Heart right ventricle (tissue), 16 donors: ENCODE measurements at regions of chr7 and their contacts with region 1.

Region 1: DNA sequence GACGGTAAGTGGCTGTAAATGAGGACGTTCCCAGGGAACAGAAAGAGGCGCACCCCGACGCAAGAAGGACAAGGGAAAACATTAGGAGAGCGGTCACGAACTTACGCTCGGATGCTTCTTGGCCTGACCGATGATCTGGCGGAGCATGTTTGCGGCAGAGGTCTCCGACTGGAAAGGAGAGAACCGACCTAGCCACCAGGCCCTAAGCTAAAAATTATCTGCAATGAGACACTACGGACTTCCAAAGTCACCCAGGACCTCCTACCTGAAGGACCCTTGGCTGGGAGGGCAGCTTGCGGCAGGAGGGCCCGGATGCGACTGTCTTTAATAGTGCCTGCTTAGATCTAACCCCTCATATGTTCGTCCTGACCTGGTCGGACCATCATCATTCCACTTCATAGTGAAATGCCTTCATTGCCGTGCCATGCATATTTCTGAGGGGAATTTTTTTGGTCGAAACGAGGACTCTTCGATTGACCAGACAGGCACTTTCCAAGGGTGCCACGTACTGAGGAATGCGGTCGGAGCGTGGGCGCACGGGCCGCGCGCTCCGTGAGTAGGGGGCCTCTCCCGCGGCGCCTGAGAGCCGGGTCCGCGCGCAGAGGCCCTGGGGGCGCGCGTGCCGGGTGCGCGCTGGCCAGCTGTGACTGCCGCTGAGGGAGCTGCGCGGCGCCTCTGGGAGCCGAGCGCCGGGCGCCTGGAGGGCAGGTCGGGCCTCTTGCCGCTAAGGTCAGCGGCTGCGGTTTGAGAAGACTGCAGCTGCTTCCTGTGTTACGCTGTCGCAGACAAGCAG is 33.6 kb upstream of the PHF14 start:
- DNase-seq: peak; percentile 89 to 92
- ATAC-seq: peak; percentile 98 to 100 (median 99)
- H3K4me3 ChIP-seq: peak overlapping the region; percentile 34 to 86 (median 76)
- H3K27ac ChIP-seq: peak overlapping the region; percentile 86 to 97 (median 95)
- H3K4me1 ChIP-seq: peaks cover 0 to 50% (median 39%) of the 10 kb centered on the region in 9 donors
- H3K27me3 ChIP-seq: no peaks in the 10 kb centered on the region
- CTCF ChIP-seq: no peak

Region 2: GRCh38 chr7:10973061-10973944 is 33.2 kb after region 1 on chr7 and contains the start of gene PHF14:
- intact Hi-C with region 1: loop called in 5 of 10 experiments (anchors 1 to 2 kb)
- DNase-seq: peak; percentile 97
- ATAC-seq: peak; percentile 99 to 100 (median 100)
- H3K4me3 ChIP-seq: peak within 1 kb of the TSS; percentile 62 to 88 (median 84)
- H3K27ac ChIP-seq: peak within 1 kb of the TSS; percentile 6 to 93 (median 84)
- H3K4me1 ChIP-seq: peaks cover 0 to 22% (median 17%) of the 10 kb centered on the region in 9 donors
- H3K27me3 ChIP-seq: peaks cover 0 to 7% (median 3%) of the 10 kb centered on the region in 7 donors
- CTCF ChIP-seq: no peak
- total RNA-seq, gene PHF14: 14.1 to 16.8 (median 14.8) TPM

Region 3: DNA sequence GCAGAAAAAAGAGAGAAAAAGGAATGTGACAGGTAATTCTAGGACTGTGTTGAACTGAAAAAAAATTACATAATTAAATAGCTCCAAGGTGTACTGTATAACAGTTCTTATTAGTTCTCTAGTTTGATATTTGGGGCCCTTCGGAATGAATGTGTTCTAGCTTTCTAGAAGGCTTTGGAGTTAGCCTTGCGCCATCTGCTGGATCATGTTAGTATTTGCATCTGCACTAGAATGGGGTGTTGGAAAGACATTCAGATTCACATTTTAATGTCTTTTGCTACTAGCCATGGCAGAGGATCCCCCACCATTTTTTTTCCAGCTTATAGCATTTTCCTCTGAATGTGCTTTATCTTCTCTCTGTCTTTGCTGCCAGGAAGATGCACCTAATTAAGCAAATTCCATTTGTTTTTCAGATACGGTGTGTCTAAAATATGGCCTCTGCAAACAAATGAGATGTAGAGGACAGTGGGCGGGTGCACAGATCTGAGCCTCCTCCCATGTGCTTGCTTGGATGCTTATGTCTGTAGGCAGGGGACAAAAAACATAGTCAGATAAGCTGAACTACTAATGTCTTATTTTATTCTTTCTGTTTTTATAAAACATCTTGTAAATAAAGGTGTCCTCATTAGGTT is 272.1 kb after region 1 on chr7:
- intact Hi-C with region 1: loop called in 1 of 10 experiments (anchors 5 kb)
- DNase-seq: peak in 1 of 2 donors; percentile 49
- ATAC-seq: peak in 6 of 8 donors; percentile 56 to 84 (median 69)
- H3K4me3 ChIP-seq: no peak overlapping the region
- H3K27ac ChIP-seq: no peak overlapping the region
- H3K4me1 ChIP-seq: peaks cover 0 to 10% (median 0%) of the 10 kb centered on the region in 9 donors
- H3K27me3 ChIP-seq: no peaks in the 10 kb centered on the region
- CTCF ChIP-seq: peak; percentile 63 to 90 (median 85)

Region 4: DNA sequence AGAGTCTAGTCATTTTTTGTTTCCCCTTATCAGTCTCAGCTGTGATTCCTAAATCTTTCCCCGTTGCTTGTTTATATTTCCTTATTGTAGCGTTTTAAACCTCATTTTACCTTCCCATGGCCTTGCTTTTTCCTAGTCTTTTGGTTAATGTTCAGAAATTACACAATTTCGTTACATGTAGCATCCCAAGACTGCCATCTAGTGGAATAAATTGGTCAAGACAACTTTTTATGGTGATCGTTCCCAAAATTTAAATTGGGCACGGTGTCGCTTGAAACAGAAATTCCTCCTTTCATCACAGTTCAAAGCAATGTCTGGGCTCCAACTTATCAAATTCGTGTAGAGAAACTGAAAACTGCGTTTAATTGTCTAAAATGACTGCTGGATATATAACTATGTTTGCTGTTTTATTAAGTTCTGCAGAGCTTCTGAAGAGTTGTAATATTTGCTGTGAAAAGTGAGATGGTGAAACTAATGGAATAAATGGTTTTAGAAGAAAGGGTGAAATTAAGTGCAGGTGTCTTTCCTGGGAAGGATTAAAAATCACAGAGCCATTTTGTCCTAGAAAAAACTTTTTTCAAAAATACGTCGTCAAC is 403.8 kb after region 1 on chr7:
- intact Hi-C with region 1: loop called in 1 of 10 experiments (anchors 10 kb)
- DNase-seq: no peak
- ATAC-seq: no peak
- H3K4me3 ChIP-seq: no peak overlapping the region
- H3K27ac ChIP-seq: no peak overlapping the region
- H3K4me1 ChIP-seq: peaks cover 0 to 7% (median 0%) of the 10 kb centered on the region in 9 donors
- H3K27me3 ChIP-seq: no peaks in the 10 kb centered on the region
- CTCF ChIP-seq: peak; percentile 48 to 81 (median 76)